GM10248 (cell line): ENCODE measurements at regions of chr7 and their contacts with region 1.

Region 1: GRCh38 chr7:24665564-24666294 is 91.5 kb downstream of the GSDME start:
- DNase-seq: peak; percentile 36
- CTCF ChIP-seq: peak; percentile 70

Region 2: DNA sequence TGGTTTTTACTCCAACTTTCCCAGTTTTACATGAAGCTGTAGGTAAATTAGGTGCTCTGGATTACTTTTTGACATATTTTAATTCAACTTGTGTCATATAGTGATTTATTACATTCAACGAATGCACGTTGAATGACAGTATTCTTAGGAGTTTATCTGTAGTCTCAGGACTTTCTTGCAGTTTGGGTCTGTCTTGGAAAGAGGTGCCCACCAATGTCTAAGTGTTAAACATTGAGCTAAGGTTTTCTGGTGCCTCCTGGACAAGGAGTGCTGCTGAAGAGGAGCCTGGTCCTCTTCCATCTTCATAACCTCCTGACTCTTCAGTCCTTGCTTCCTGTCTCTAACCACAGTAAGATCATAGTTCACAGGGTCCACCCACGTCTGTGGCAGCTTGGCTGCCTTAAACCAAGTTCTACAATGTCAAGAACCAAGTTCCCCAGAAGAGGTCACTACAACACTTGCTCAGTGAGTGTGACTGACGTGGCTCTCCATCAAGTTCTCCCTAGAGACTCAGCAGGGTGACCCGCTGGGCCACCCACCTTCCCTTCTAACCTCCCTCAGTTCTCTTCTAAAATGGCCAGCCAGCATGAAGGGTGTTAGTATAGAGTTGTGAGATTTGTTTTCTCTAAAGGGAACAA is 375.6 kb before region 1 on chr7:
- CTCF ChIA-PET with region 1: interaction called, 31 read pairs
- POLR2A ChIA-PET with region 1: no interaction called
- DNase-seq: peak; percentile 81
- CTCF ChIP-seq: peak; percentile 57

Region 3: GRCh38 chr7:24572997-24573625 is 92.6 kb before region 1 on chr7 and contains the start of gene PALS2:
- CTCF ChIA-PET with region 1: interaction called, 52 read pairs
- POLR2A ChIA-PET with region 1: no interaction called
- DNase-seq: peak; percentile 89
- CTCF ChIP-seq: no peak

Region 4: GRCh38 chr7:24580283-24580946 is 85.3 kb before region 1 on chr7:
- CTCF ChIA-PET with region 1: interaction called, 52 read pairs
- POLR2A ChIA-PET with region 1: no interaction called
- DNase-seq: no peak
- CTCF ChIP-seq: no peak

Region 5: GRCh38 chr7:24587848-24588247 is 77.9 kb before region 1 on chr7:
- CTCF ChIA-PET with region 1: interaction called, 16 read pairs
- POLR2A ChIA-PET with region 1: no interaction called
- DNase-seq: no peak
- CTCF ChIP-seq: peak; percentile 49

Region 6: DNA sequence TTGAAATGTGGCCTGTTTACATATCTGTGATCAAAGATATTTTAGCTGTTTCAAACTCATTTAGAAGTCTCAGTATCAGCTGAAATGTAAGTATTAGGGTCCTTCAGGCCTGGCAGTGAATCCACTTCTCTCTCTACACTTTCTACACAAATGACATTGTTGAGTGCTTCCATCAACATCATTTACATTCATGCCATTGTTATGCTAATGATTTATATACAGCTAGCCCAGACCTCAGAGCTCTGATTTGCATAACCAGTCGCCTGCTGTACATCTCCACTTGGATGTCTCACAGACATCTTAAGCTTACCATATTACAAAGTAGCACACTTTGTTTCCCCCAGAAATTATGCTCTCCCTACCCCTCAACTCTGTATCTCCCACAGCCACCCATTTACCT is 20.0 kb after region 1 on chr7:
- CTCF ChIA-PET with region 1: interaction called, 12 read pairs
- POLR2A ChIA-PET with region 1: no interaction called
- DNase-seq: no peak
- CTCF ChIP-seq: no peak

Region 7: GRCh38 chr7:24819916-24820689 is 154.4 kb after region 1 on chr7:
- CTCF ChIA-PET with region 1: no interaction called
- POLR2A ChIA-PET with region 1: no interaction called
- DNase-seq: peak; percentile 81
- CTCF ChIP-seq: peak; percentile 75

Region 8: DNA sequence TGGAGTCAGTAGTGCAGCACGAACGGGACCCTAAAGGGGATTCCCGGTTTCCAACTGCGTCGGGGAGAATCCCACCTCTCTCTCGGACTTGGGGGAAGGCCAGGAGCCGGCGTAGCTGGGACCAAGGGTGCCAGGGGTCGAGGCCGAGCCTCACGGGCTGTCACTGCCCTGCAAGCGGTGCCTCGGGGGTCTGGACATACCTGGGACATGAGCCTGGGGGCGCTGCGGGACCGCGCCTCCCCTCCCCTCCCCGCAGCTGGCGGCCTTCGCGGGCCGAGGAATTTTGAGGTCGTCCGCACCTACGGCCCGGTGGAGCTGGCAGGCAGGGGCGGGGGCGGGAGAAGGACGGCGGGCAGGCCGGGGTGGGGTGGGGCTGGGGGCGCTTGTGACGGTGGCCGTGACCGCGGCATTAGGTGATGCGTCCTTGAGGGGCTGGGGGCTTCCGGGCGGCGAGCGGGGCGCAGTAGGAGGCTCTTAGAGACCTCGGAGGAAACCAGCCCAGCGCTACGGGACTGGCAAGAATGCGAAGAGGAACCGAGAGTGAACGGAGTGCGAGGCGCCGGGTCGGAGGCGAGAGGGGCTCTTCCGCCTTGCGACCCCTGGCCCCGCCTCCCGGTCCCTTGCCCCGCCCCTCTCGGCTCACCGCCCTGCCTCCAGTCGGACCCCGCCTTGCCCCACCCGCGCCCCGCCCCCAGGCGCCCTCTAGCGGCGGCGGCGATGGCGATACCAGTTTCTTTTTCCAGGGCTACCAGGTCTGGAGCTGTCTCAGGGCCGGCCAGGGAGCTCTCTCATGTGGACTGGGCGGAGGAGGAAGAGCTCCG is 514.3 kb after region 1 on chr7:
- CTCF ChIA-PET with region 1: no interaction called
- POLR2A ChIA-PET with region 1: no interaction called
- DNase-seq: peak; percentile 99
- CTCF ChIP-seq: peak; percentile 70